ENCODE measurements at regions of chr2 and their contacts with region 1.

Region 1: DNA sequence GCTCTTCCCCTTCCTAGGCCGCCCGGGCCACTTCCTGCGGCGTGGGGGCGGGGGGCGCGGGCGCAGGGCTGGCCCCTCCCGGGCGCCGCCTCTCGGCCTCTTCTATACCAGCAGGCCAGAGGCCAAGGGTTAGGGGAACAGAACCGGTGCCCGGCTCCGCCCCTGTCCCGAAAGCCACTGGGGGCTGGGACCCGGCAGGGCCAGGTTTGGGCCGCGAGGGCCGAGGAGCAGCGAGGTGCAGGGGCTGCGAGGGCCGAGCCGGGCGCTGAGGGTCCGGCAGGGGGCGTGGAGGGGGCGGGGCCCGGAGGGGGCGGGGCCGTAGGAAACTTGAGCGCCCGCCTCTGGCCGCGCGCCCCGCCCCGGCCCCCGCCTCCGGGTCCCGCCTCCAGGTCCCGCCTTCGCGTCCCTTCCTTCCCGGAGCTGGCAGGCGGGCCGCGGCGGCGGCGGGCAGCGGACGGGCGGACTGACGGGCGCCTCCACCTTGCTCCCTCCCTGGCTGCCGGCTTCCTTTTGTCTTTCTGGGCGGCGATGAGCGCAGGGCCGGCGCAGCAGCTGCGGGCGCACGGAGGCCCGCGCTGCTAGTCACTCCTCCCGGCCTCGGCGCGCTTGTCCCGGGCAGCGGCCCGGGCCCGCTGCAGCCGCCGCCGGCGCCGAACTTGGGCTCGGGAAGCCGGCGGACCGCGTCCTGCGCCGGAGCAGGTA is at the start of gene HPCAL1:
- DNase-seq: peak; percentile 84 to 87
- ATAC-seq: peak; percentile 82 to 91 (median 82)
- H3K4me3 ChIP-seq: peak within 1 kb of the TSS; percentile 82
- H3K4me3 Mint-ChIP-seq: peak within 1 kb of the TSS; percentile 95
- H3K27ac ChIP-seq: peak within 1 kb of the TSS; percentile 69
- H3K27ac Mint-ChIP-seq: peak within 1 kb of the TSS in 1 of 2 donors; percentile 82
- H3K4me1 ChIP-seq: peaks cover 55% of the 10 kb centered on the region
- H3K4me1 Mint-ChIP-seq: peaks cover 62 to 68% of the 10 kb centered on the region in 2 donors
- H3K27me3 ChIP-seq: no peaks in the 10 kb centered on the region
- H3K27me3 Mint-ChIP-seq: no peaks in the 10 kb centered on the region
- CTCF ChIP-seq: peak; percentile 74
- total RNA-seq, gene HPCAL1: 31.1 to 45.2 (median 39.8) TPM

Region 2: DNA sequence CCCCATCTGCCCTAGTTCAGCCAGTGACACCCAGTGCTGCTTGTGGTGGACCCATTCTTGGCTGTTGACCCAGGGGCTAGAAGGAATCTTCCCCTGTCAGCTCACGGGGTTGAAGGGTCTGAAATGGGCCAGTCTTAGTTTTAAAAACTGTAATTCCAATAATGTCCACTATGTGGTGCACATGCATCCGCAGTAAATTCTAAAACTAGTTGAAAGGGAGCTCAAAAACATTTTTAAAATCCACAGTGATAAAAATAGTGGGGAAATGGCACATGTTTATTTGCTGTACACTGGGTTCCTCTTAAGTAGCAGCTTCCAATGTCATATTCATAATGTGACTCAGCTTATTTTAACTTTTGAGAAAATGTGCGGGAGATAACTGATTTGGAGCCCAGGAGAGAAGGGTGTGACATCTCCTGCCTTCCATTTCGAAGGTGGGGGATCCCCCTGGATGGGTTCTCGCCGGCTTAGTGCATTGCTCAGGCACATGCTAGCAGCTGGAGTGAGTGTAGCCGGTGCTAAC is 318.4 kb before region 1 on chr2:
- intact Hi-C with region 1: no loop called
- DNase-seq: peak in 1 of 2 donors; percentile 84
- ATAC-seq: peak; percentile 81 to 95 (median 89)
- H3K4me3 ChIP-seq: no peak overlapping the region
- H3K4me3 Mint-ChIP-seq: no peak overlapping the region
- H3K27ac ChIP-seq: no peak overlapping the region
- H3K27ac Mint-ChIP-seq: peak overlapping the region in 1 of 2 donors; percentile 29
- H3K4me1 ChIP-seq: peaks cover 6% of the 10 kb centered on the region
- H3K4me1 Mint-ChIP-seq: peaks cover 6 to 12% of the 10 kb centered on the region in 2 donors
- H3K27me3 ChIP-seq: no peaks in the 10 kb centered on the region
- H3K27me3 Mint-ChIP-seq: peaks cover 3 to 13% of the 10 kb centered on the region in 2 donors
- CTCF ChIP-seq: peak; percentile 80

Region 3: DNA sequence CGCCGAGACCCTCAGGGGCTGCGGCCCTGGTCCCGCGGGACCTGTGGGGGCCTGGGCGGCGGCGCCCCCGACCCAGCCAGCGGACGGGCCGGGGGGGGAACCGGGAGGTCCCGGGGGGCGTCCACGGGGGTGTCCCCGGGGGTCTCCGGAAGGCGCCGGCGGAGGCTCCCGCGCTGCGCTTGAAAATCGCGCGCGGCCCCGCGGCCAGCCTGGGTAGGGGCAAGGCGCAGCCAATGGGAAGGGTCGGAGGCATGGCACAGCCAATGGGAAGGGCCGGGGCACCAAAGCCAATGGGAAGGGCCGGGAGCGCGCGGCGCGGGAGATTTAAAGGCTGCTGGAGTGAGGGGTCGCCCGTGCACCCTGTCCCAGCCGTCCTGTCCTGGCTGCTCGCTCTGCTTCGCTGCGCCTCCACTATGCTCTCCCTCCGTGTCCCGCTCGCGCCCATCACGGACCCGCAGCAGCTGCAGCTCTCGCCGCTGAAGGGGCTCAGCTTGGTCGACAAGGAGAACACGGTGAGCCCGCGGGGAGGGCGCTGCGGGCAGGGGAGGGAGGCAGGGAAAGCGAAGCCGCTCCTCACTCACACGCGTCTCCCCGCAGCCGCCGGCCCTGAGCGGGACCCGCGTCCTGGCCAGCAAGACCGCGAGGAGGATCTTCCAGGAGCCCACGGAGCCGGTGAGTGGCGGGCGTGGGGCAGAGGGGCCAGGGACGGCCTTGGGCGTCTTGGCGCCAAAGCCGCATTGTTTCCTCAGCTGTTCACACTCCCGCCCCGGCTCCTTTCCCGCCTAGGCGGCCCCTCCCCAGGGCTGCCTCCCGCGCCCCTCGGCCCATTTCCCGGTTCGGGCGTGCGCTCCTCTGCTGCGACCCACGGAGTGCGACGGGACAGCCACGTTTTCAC is 180.0 kb before region 1 on chr2 and contains the start of gene RRM2:
- intact Hi-C with region 1: loop called (anchors 2 kb)
- DNase-seq: peak; percentile 86 to 93
- ATAC-seq: peak; percentile 73 to 87 (median 78)
- H3K4me3 ChIP-seq: peak within 1 kb of the TSS; percentile 44
- H3K4me3 Mint-ChIP-seq: peak within 1 kb of the TSS; percentile 97
- H3K27ac ChIP-seq: no peak within 1 kb of the TSS
- H3K27ac Mint-ChIP-seq: peak within 1 kb of the TSS; percentile 89 to 92
- H3K4me1 ChIP-seq: peaks cover 55% of the 10 kb centered on the region
- H3K4me1 Mint-ChIP-seq: peaks cover 50 to 54% of the 10 kb centered on the region in 2 donors
- H3K27me3 ChIP-seq: peaks cover 3% of the 10 kb centered on the region
- H3K27me3 Mint-ChIP-seq: no peaks in the 10 kb centered on the region
- CTCF ChIP-seq: no peak
- total RNA-seq, gene RRM2: 16.1 to 22.1 (median 18.5) TPM

Region 4: DNA sequence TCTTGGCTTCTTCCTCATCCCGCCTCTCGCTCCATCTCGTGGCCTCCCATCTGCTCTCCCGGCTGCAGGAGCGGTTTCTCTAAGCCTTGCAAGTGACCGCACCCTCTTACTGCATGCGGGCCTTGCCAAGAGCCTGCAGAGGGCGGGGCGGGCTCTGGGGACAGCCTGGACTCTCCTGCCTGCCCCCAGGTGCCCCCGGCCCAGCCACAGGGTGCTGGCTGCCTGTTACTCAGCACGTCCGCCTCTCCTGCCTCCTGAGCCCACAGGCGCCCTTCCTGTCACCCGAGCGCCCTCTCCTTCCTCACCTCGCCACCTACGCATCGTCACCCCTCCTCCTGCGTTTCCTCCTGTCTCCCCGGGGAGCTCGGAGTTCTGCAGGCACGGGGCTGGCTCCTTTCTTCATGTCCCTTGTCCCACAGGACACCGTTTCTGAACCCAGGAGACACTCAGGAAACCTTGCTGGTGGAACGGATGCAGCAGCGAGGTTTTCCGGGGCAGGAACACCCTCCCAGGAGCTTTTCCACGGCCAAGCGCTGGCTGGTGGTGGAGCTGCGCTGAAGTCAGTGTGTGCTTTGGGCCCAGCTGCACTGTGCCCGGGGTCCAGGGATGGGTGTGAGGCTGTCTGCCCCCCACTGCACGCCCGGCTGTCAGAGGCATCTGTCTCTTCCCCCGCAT is 28.5 kb after region 1 on chr2:
- intact Hi-C with region 1: loop called (anchors 2 kb)
- DNase-seq: peak; percentile 42 to 83
- ATAC-seq: peak; percentile 69 to 71 (median 69)
- H3K4me3 ChIP-seq: peak overlapping the region; percentile 46
- H3K4me3 Mint-ChIP-seq: peak overlapping the region; percentile 93
- H3K27ac ChIP-seq: peak overlapping the region; percentile 48
- H3K27ac Mint-ChIP-seq: peak overlapping the region; percentile 82 to 87
- H3K4me1 ChIP-seq: peaks cover 54% of the 10 kb centered on the region
- H3K4me1 Mint-ChIP-seq: peaks cover 63 to 66% of the 10 kb centered on the region in 2 donors
- H3K27me3 ChIP-seq: no peaks in the 10 kb centered on the region
- H3K27me3 Mint-ChIP-seq: no peaks in the 10 kb centered on the region
- CTCF ChIP-seq: no peak

Region 5: GRCh38 chr2:10382354-10383061 is 79.9 kb after region 1 on chr2:
- intact Hi-C with region 1: loop called (anchors 5 kb)
- DNase-seq: peak; percentile 37 to 85
- ATAC-seq: peak; percentile 95 to 96 (median 95)
- H3K4me3 ChIP-seq: peak overlapping the region; percentile 28
- H3K4me3 Mint-ChIP-seq: peak overlapping the region; percentile 66
- H3K27ac ChIP-seq: peak overlapping the region; percentile 54
- H3K27ac Mint-ChIP-seq: peak overlapping the region; percentile 79 to 83
- H3K4me1 ChIP-seq: peaks cover 85% of the 10 kb centered on the region
- H3K4me1 Mint-ChIP-seq: peaks cover 64 to 69% of the 10 kb centered on the region in 2 donors
- H3K27me3 ChIP-seq: no peaks in the 10 kb centered on the region
- H3K27me3 Mint-ChIP-seq: no peaks in the 10 kb centered on the region
- CTCF ChIP-seq: no peak

Region 6: DNA sequence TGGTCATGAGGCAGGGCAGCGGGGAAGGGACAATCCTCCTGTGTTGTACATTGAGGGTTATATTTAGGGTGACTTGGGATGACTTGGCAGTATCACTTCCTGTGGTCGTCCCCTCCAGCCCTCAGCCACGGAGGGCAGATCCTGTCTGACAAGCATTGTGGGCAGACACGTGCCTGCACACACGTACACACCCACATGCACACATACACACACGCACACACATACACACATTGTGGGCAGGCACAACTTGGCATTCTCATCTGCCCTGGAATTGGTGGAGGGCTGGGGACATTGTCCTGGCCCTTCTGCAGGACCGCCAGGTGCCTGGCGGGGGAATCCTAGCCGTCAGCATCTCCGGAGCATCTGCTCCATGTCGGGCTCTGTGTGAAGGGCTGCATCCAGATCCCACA is 97.9 kb after region 1 on chr2:
- intact Hi-C with region 1: no loop called
- DNase-seq: peak in 1 of 2 donors; percentile 44
- ATAC-seq: peak; percentile 21 to 84 (median 72)
- H3K4me3 ChIP-seq: no peak overlapping the region
- H3K4me3 Mint-ChIP-seq: peak overlapping the region; percentile 64
- H3K27ac ChIP-seq: no peak overlapping the region
- H3K27ac Mint-ChIP-seq: peak overlapping the region; percentile 27 to 63
- H3K4me1 ChIP-seq: peaks cover 36% of the 10 kb centered on the region
- H3K4me1 Mint-ChIP-seq: peaks cover 21 to 53% of the 10 kb centered on the region in 2 donors
- H3K27me3 ChIP-seq: no peaks in the 10 kb centered on the region
- H3K27me3 Mint-ChIP-seq: no peaks in the 10 kb centered on the region
- CTCF ChIP-seq: no peak

Measured in natural killer cell (primary cell).